ENCODE measurements at regions of chr1 and their contacts with region 1.

Region 1: DNA sequence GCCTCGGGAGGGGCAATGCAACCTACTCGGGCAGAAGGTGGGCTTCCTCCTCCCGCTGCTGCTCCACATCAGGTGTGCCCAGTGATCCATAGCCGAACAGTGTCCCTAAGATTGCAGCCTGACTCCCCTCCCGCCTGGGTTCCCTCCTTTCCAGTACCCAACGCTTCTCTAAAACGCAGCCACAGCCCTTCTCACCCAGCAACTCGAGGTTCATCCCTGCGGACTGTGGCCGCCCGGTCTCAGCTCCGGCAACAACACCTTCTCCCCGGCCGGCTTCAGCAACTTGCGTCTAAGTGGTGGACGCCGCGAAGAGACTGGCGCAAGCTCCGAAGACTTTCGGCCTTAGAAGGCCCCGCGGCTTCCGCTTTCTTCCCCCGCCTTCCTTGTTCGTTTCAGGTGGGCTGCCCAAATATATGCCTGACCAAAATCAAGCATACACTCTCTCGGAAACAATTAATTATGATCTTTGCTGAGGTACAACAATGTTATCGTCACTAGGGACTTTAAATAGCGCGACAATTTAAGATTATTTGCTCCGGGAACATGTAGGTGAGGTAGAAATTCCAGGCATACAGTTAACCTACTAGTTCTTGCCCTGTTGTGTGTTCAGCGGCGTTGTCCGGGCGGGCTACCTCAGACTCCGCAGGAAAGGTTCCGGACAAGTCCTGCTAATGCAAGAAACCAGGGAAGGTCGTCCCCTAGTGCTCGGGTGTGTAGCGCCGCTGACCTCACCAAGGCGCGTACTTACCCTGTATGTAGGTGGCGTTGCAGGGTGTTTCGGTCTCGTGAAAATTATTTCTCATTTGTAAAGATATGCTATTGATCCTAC is at the start of gene RBBP5:
- DNase-seq: peak; percentile 96
- ATAC-seq: peak; percentile 99 to 100
- H3K4me3 ChIP-seq: peak within 1 kb of the TSS; percentile 92
- H3K27ac ChIP-seq: peak within 1 kb of the TSS; percentile 95
- H3K4me1 ChIP-seq: peaks cover 27% of the 10 kb centered on the region
- H3K27me3 ChIP-seq: no peaks in the 10 kb centered on the region
- CTCF ChIP-seq: peak; percentile 76
- total RNA-seq, gene RBBP5: 17.9 TPM

Region 2: DNA sequence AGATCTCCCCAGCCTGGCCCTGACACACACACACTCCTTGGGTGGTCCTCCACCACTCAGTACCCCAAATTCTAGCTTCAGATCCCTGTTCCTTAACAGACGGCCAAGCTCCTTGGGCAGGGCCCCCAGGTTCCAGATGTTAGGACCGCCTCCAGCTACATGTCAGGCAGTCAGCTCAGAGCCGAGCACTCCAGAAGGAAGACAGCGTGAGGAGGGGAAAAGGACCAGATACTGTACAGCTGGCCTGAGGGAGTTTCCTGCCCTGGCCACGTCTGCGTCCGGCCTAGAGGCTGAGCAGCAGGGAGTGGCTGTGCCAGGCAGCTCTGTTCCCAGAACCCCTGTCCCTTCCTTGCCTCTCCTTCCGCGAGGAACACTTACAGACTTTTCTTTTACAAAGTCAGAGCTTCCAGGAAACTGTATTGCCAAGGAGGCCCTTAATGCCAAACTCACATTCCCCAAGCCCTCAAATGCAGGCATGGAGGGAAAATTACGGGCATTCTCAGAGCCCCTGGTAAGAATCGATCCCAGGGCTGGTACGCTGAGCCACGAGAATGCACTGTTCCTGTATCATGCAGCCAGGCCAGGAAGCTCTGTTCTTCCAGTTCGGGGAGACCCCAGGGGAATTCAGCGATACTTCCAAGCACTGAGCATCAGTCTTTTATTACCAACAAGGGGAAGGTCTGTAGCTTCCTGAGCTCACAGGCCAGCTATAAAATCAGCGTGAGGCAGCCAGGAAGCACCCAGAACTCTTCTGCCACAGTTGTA is 124.1 kb before region 1 on chr1:
- intact Hi-C with region 1: no loop called
- DNase-seq: no peak
- ATAC-seq: peak; percentile 23 to 27
- H3K4me3 ChIP-seq: no peak overlapping the region
- H3K27ac ChIP-seq: no peak overlapping the region
- H3K4me1 ChIP-seq: no peaks in the 10 kb centered on the region
- H3K27me3 ChIP-seq: peaks cover 2% of the 10 kb centered on the region
- CTCF ChIP-seq: no peak

Region 3: GRCh38 chr1:205172729-205173366 is 51.0 kb after region 1 on chr1:
- intact Hi-C with region 1: no loop called
- DNase-seq: no peak
- ATAC-seq: no peak
- H3K4me3 ChIP-seq: no peak overlapping the region
- H3K27ac ChIP-seq: no peak overlapping the region
- H3K4me1 ChIP-seq: peaks cover 13% of the 10 kb centered on the region
- H3K27me3 ChIP-seq: no peaks in the 10 kb centered on the region
- CTCF ChIP-seq: no peak

Region 4: GRCh38 chr1:205255941-205256780 is 134.3 kb after region 1 on chr1:
- intact Hi-C with region 1: loop called (anchors 10 kb)
- DNase-seq: peak; percentile 89
- ATAC-seq: peak; percentile 93 to 94
- H3K4me3 ChIP-seq: no peak overlapping the region
- H3K27ac ChIP-seq: no peak overlapping the region
- H3K4me1 ChIP-seq: peaks cover 37% of the 10 kb centered on the region
- H3K27me3 ChIP-seq: no peaks in the 10 kb centered on the region
- CTCF ChIP-seq: peak; percentile 96

Measured in lower lobe of right lung (tissue), 2 donors.